ENCODE measurements at regions of chr4 and their contacts with region 1.

Region 1: GRCh38 chr4:151882072-151882803 is 121.4 kb upstream of the GATB start:
- DNase-seq: no peak
- H3K4me3 Mint-ChIP-seq: no peak overlapping the region
- H3K27ac Mint-ChIP-seq: peak overlapping the region; percentile 46
- H3K4me1 Mint-ChIP-seq: peaks cover 22% of the 10 kb centered on the region
- H3K27me3 Mint-ChIP-seq: no peaks in the 10 kb centered on the region

Region 2: GRCh38 chr4:151760712-151761527 is 121.3 kb before region 1 on chr4 and contains the start of gene GATB:
- intact Hi-C with region 1: loop called (anchors 1 kb)
- DNase-seq: peak; percentile 88
- H3K4me3 Mint-ChIP-seq: peak within 1 kb of the TSS; percentile 100
- H3K27ac Mint-ChIP-seq: peak within 1 kb of the TSS; percentile 99
- H3K4me1 Mint-ChIP-seq: peaks cover 12% of the 10 kb centered on the region
- H3K27me3 Mint-ChIP-seq: peaks cover 2% of the 10 kb centered on the region
- total RNA-seq, gene GATB: 17.7 and 19.6 TPM in 2 replicates

Region 3: DNA sequence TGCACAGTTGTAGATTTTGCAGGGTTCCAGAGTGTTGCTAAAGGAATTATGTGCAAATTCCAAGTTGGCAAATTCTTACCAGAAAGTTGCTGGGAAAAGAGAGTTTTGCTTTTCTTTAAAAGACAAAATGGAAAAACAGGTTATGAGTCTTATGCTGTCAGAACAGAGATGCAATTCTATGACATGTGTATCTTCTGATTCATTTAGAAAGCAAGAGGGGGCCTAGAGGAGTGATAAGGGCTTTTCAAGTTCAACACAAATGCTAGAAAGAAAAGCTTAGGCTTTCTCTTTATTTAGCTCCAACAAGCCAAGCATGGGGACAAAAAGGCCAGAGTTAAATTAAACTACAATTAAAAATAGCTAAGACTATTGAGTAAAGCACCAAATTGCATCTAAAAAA is 49.1 kb before region 1 on chr4:
- intact Hi-C with region 1: loop called (anchors 1 kb)
- DNase-seq: no peak
- H3K4me3 Mint-ChIP-seq: no peak overlapping the region
- H3K27ac Mint-ChIP-seq: no peak overlapping the region
- H3K4me1 Mint-ChIP-seq: peaks cover 2% of the 10 kb centered on the region
- H3K27me3 Mint-ChIP-seq: peaks cover 9% of the 10 kb centered on the region

Measured in activated T-helper 2 cell treated with anti-CD3 and anti-CD28 coated beads, Interferon-gamma antibody, Interleukin-2, Interleukin-4, amounts not matched to agents 10 μg/mL and 5 μg/mL and 100 μg/mL, durations not matched to agents 14 hours and 24 hours and 36 hours (primary cell).